GM10248 (cell line): ENCODE measurements at regions of chr6 and their contacts with region 1.

Region 1: GRCh38 chr6:133952815-133953633 is at the start of gene TBPL1:
- DNase-seq: peak; percentile 92
- CTCF ChIP-seq: no peak

Region 2: GRCh38 chr6:133966654-133967329 is 13.8 kb after region 1 on chr6:
- CTCF ChIA-PET with region 1: interaction called, 13 read pairs
- POLR2A ChIA-PET with region 1: interaction called, 4 read pairs
- DNase-seq: peak; percentile 27
- CTCF ChIP-seq: no peak

Region 3: DNA sequence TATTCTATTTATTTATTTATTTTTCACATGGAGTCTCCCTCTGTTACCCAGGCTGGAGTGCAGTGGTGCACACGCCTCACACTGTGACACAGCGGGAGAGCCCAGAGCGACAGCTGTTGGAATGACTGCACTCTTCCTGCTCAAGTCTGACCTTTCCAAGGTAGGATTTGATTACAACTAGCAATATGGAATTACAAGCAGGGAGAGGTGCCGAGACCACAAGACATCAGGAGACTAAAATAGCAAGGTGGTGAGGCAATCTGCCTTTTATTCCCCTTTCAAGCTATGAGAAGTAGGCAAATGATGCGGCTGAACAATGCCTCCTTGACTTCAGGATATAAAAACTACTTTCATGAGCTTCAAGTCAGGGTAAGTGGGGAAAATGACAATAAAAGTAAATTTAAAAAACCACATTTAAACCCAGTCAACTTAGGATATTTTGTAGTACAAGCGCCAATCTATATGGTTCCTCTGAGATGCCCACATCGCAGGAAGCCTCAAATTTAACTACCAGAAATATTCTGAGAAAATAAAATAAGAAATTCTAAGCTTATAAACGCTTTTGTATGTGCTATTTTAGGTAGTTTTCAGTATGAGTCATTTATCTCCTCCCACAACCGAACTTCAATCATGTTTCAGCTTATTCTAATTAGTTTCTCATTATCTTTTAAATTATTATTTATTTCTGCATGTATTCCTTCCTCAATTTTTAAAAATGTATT is 511.8 kb after region 1 on chr6:
- CTCF ChIA-PET with region 1: no interaction called
- POLR2A ChIA-PET with region 1: no interaction called
- DNase-seq: peak; percentile 27
- CTCF ChIP-seq: no peak